ENCODE measurements at regions of chr3 and their contacts with region 1.

Region 1: GRCh38 chr3:15557511-15557946 is 36.0 kb upstream of the COLQ start:
- DNase-seq: peak; percentile 82
- ATAC-seq: peak; percentile 73
- H3K4me3 ChIP-seq: no peak overlapping the region
- H3K4me3 Mint-ChIP-seq: no peak overlapping the region
- H3K27ac ChIP-seq: peak overlapping the region in 1 of 2 donors; percentile 78
- H3K27ac Mint-ChIP-seq: no peak overlapping the region
- H3K4me1 ChIP-seq: peaks cover 23 to 30% of the 10 kb centered on the region in 2 donors
- H3K4me1 Mint-ChIP-seq: peaks cover 29% of the 10 kb centered on the region
- H3K27me3 ChIP-seq: no peaks in the 10 kb centered on the region
- H3K27me3 Mint-ChIP-seq: no peaks in the 10 kb centered on the region
- CTCF ChIP-seq: peak; percentile 80

Region 2: GRCh38 chr3:15098503-15099363 is 458.8 kb before region 1 on chr3 and contains the start of gene RBSN:
- CTCF ChIA-PET with region 1: no interaction called
- POLR2A ChIA-PET with region 1: no interaction called
- intact Hi-C with region 1: loop called (anchors 5 kb)
- DNase-seq: peak; percentile 97
- ATAC-seq: peak; percentile 84
- H3K4me3 ChIP-seq: peak within 1 kb of the TSS; percentile 73 to 94 (median 82)
- H3K4me3 Mint-ChIP-seq: peak within 1 kb of the TSS; percentile 98
- H3K27ac ChIP-seq: peak within 1 kb of the TSS; percentile 91 to 97
- H3K27ac Mint-ChIP-seq: peak within 1 kb of the TSS; percentile 96
- H3K4me1 ChIP-seq: peaks cover 13 to 23% of the 10 kb centered on the region in 2 donors
- H3K4me1 Mint-ChIP-seq: peaks cover 30% of the 10 kb centered on the region
- H3K27me3 ChIP-seq: peaks cover 0 to 9% (median 0%) of the 10 kb centered on the region in 4 experiments
- H3K27me3 Mint-ChIP-seq: no peaks in the 10 kb centered on the region
- CTCF ChIP-seq: no peak
- total RNA-seq, gene RBSN: 31.2 and 32.6 TPM in 2 replicates

Region 3: DNA sequence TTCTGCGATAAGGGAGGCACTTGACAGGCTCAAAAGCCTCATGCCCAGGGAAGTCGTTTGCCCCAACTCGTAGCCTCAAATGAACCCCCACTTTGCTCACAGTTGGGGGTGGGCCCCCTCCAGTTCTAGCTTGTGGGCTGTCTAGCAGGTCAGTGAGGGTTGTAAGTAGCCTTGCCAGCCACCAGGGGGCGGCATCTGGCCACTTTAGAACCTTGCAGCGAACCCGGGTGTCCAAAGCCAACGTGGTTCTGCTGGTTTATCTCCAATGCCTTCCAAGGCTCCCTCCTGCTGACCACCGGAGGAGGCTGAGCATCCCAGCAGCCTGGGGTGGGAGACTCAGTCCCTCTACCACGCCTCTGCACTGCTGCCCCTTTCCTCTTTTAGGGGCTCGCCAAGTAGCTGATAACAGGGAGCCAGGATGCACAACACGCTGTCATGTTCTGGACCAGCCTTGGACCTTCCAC is 449.4 kb before region 1 on chr3:
- CTCF ChIA-PET with region 1: interaction called, 11 read pairs
- POLR2A ChIA-PET with region 1: no interaction called
- intact Hi-C with region 1: no loop called
- DNase-seq: peak; percentile 82
- ATAC-seq: peak; percentile 98
- H3K4me3 ChIP-seq: no peak overlapping the region
- H3K4me3 Mint-ChIP-seq: no peak overlapping the region
- H3K27ac ChIP-seq: no peak overlapping the region
- H3K27ac Mint-ChIP-seq: no peak overlapping the region
- H3K4me1 ChIP-seq: peaks cover 3 to 6% of the 10 kb centered on the region in 2 donors
- H3K4me1 Mint-ChIP-seq: peaks cover 6% of the 10 kb centered on the region
- H3K27me3 ChIP-seq: peaks cover 0 to 9% (median 0%) of the 10 kb centered on the region in 4 experiments
- H3K27me3 Mint-ChIP-seq: peaks cover 4% of the 10 kb centered on the region
- CTCF ChIP-seq: peak; percentile 90

Region 4: GRCh38 chr3:15427182-15427880 is 130.2 kb before region 1 on chr3 and contains the starts of genes EAF1 and METTL6:
- CTCF ChIA-PET with region 1: interaction called, 9 read pairs
- POLR2A ChIA-PET with region 1: no interaction called
- intact Hi-C with region 1: loop called (anchors 1 kb)
- DNase-seq: peak; percentile 88
- ATAC-seq: peak; percentile 89
- H3K4me3 ChIP-seq: peak within 1 kb of the TSS; percentile 88 to 99 (median 94)
- H3K4me3 Mint-ChIP-seq: peak within 1 kb of the TSS; percentile 95
- H3K27ac ChIP-seq: peak within 1 kb of the TSS; percentile 75 to 85
- H3K27ac Mint-ChIP-seq: peak within 1 kb of the TSS; percentile 92
- H3K4me1 ChIP-seq: peaks cover 19 to 28% of the 10 kb centered on the region in 2 donors
- H3K4me1 Mint-ChIP-seq: peaks cover 45% of the 10 kb centered on the region
- H3K27me3 ChIP-seq: no peaks in the 10 kb centered on the region
- H3K27me3 Mint-ChIP-seq: no peaks in the 10 kb centered on the region
- CTCF ChIP-seq: peak; percentile 56
- total RNA-seq, gene EAF1: 19.8 TPM in 2 replicates
- total RNA-seq, gene METTL6: 23.9 and 27.1 TPM in 2 replicates

Region 5: DNA sequence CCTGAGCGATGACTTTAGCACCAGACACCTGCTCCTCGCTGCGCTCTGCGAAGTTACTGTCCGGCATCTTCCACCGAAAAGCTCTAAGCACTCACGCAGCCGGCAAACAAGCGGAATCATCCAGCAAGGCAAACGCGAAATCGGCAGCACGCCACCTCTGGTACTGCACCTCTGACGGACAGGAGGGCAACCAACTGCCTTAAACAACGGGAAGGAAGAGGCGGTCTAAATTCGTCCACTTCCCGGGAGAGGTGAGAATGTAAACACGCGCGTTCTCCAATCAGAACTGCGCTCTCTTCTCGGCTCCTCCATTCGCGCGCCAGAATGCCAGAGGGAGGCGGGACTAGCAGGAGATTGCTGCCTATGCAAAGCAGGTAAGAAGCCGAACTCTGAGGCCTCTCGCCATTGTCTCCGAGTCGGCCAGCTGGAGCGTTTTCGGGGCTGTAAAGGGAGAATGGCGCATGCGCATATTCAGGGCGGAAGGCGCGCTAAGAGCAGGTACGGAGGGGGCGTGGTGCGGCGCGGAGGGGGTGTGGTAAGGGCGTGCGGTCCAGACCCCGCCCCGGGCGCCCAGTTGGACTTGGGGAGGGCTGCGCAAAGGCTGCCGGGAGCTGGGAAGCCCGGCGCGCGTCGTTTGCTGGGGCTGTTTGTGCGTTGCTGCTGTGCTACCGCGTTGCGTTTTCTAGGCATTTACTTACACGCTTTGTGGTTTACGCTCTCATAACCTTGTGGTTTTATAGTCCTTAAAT is 44.0 kb after region 1 on chr3 and contains the starts of genes BTD and HACL1:
- CTCF ChIA-PET with region 1: interaction called, 3 read pairs
- POLR2A ChIA-PET with region 1: no interaction called
- intact Hi-C with region 1: loop called (anchors 2 kb)
- DNase-seq: peak; percentile 99
- ATAC-seq: peak; percentile 88
- H3K4me3 ChIP-seq: peak within 1 kb of the TSS; percentile 67 to 99 (median 92)
- H3K4me3 Mint-ChIP-seq: peak within 1 kb of the TSS; percentile 100
- H3K27ac ChIP-seq: peak within 1 kb of the TSS; percentile 81 to 87
- H3K27ac Mint-ChIP-seq: peak within 1 kb of the TSS; percentile 99
- H3K4me1 ChIP-seq: peaks cover 16 to 23% of the 10 kb centered on the region in 2 donors
- H3K4me1 Mint-ChIP-seq: peaks cover 41% of the 10 kb centered on the region
- H3K27me3 ChIP-seq: no peaks in the 10 kb centered on the region
- H3K27me3 Mint-ChIP-seq: no peaks in the 10 kb centered on the region
- CTCF ChIP-seq: peak; percentile 31
- total RNA-seq, gene BTD: 21.9 and 25.3 TPM in 2 replicates
- total RNA-seq, gene HACL1: 38.7 and 38.9 TPM in 2 replicates